Activated T-helper 1 cell treated with anti-CD3 and anti-CD28 coated beads, Interleukin-12 subunit alpha, Interleukin-12 subunit beta, Interleukin-2, Interleukin-4 antibody, amounts not matched to agents 30 ng/mL and 10 ng/mL and 1 ng/mL, durations not matched to agents 14 hours and 24 hours and 36 hours (primary cell): ENCODE measurements at regions of chr5 and their contacts with region 1.

Region 1: GRCh38 chr5:154857530-154858296 is 714 bp upstream of the CNOT8 start:
- DNase-seq: peak; percentile 81
- H3K4me3 Mint-ChIP-seq: peak overlapping the region; percentile 99
- H3K27ac Mint-ChIP-seq: peak overlapping the region; percentile 100
- H3K4me1 Mint-ChIP-seq: peaks cover 41% of the 10 kb centered on the region
- H3K27me3 Mint-ChIP-seq: no peaks in the 10 kb centered on the region

Region 2: GRCh38 chr5:154196955-154197652 is 660.6 kb before region 1 on chr5:
- intact Hi-C with region 1: loop called (anchors 5 kb)
- DNase-seq: no peak
- H3K4me3 Mint-ChIP-seq: peak overlapping the region; percentile 73
- H3K27ac Mint-ChIP-seq: peak overlapping the region; percentile 94
- H3K4me1 Mint-ChIP-seq: peaks cover 93% of the 10 kb centered on the region
- H3K27me3 Mint-ChIP-seq: no peaks in the 10 kb centered on the region

Region 3: GRCh38 chr5:154647114-154647760 is 210.5 kb before region 1 on chr5:
- intact Hi-C with region 1: loop called (anchors 1 kb)
- DNase-seq: no peak
- H3K4me3 Mint-ChIP-seq: peak overlapping the region; percentile 72
- H3K27ac Mint-ChIP-seq: no peak overlapping the region
- H3K4me1 Mint-ChIP-seq: peaks cover 16% of the 10 kb centered on the region
- H3K27me3 Mint-ChIP-seq: peaks cover 23% of the 10 kb centered on the region

Region 4: GRCh38 chr5:154801083-154801482 is 56.6 kb before region 1 on chr5:
- intact Hi-C with region 1: no loop called
- DNase-seq: no peak
- H3K4me3 Mint-ChIP-seq: no peak overlapping the region
- H3K27ac Mint-ChIP-seq: no peak overlapping the region
- H3K4me1 Mint-ChIP-seq: peaks cover 30% of the 10 kb centered on the region
- H3K27me3 Mint-ChIP-seq: no peaks in the 10 kb centered on the region

Region 5: GRCh38 chr5:154811653-154812365 is 45.9 kb before region 1 on chr5:
- intact Hi-C with region 1: loop called (anchors 1 kb)
- DNase-seq: peak; percentile 37
- H3K4me3 Mint-ChIP-seq: no peak overlapping the region
- H3K27ac Mint-ChIP-seq: no peak overlapping the region
- H3K4me1 Mint-ChIP-seq: peaks cover 42% of the 10 kb centered on the region
- H3K27me3 Mint-ChIP-seq: no peaks in the 10 kb centered on the region